GM10248 (cell line): ENCODE measurements at regions of chr6 and their contacts with region 1.

Region 1: DNA sequence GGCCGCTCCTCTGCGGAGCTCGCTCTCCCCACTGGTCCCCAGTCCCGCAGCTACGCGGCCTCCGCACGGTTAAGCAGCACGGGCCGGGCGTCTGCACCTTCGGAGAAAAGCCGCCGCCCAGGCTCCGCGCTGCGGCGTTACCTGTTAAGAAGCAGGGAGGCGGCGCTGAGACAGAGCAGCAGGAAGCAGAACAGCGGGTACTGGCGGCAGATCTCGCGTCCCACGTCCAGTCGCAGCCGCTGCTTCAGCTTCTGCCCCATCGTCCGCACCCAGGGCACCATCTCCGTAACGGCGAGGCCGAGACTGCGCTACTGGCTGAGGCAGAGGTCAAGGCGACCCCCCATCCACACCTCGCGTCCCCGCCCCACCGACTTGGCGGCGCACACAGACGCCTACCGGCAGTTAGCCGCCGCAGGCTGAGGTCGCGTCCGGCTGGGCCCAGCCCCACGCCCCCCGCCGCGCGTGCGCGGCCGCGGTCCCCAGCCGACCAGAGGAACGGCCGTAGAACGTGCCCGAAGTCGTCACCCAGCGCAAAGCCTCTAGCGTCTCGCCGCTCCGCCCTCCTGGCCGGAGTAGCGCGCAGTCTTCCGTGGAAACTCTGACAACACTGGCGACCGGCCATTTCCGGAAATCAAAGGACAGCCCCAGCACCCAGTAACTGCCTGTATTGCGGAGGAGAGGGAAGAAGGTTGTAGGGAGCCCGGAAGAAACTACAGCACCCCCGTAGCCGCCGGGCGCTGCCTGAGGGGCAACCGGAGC is at the start of gene SNX14:
- DNase-seq: peak; percentile 94
- CTCF ChIP-seq: no peak

Region 2: GRCh38 chr6:84847365-84848160 is 746.1 kb before region 1 on chr6:
- CTCF ChIA-PET with region 1: no interaction called
- POLR2A ChIA-PET with region 1: no interaction called
- DNase-seq: no peak
- CTCF ChIP-seq: no peak

Region 3: DNA sequence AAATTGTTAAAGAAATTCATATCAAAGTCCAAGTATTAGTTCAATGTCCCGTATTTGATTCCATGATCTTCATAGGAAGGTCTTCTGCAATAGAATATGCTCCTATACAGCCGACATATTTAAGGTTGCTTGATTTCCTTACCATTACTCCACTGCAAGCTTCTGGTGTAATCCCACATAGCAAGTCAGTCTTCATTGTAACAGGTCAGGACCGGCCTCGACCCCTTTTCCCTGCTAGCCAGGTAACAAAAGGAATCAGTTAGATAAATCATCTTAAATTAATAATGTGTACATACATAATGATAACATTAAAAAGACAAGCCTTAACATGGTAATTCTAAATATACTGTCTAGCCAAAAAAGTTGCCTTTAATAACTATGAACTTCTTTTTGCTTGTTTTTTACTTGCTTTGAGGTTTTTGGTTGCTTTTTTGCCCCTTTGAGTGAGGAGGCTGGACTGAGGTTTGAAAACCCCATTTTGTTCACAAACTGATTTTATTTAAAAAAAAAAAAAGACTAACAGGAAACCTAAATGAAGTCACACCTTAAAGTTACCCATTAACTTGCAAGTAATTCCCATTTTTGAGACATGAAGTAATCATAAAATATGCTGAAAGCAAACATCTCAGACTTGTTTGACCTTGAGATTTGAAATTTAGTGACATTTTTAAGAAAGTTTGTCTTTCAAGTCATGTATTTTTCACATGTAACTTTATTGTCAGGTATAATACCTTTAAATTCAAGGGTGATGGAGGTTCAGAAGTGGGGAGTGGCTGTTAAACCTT is 19.3 kb after region 1 on chr6:
- CTCF ChIA-PET with region 1: interaction called, 11 read pairs
- POLR2A ChIA-PET with region 1: no interaction called
- DNase-seq: no peak
- CTCF ChIP-seq: no peak

Region 4: DNA sequence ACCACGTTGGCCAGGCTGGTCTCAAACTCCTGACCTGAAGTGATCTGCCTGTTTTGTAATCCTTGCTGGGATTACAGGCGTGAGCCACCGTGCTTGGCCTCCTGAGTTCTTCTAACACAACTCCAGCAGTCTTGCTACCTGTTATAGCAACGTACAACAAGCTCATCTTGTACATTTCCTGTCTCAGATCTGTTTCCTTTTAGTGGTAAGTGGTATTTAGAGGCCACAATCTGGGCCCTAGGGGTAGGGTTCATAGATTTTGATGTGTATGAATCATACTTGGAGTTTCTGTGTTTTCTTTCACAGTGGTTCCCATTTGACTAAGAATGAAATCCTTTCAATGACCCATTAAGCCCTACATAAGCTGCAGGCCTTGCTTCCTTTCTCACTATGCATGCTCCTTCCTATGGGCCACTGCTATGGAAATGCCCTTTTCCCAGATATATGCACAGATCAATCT is 76.1 kb after region 1 on chr6:
- CTCF ChIA-PET with region 1: no interaction called
- POLR2A ChIA-PET with region 1: interaction called, 10 read pairs
- DNase-seq: peak; percentile 68
- CTCF ChIP-seq: no peak